B cell (primary cell): ENCODE measurements at regions of chr16 and their contacts with region 1.

Region 1: DNA sequence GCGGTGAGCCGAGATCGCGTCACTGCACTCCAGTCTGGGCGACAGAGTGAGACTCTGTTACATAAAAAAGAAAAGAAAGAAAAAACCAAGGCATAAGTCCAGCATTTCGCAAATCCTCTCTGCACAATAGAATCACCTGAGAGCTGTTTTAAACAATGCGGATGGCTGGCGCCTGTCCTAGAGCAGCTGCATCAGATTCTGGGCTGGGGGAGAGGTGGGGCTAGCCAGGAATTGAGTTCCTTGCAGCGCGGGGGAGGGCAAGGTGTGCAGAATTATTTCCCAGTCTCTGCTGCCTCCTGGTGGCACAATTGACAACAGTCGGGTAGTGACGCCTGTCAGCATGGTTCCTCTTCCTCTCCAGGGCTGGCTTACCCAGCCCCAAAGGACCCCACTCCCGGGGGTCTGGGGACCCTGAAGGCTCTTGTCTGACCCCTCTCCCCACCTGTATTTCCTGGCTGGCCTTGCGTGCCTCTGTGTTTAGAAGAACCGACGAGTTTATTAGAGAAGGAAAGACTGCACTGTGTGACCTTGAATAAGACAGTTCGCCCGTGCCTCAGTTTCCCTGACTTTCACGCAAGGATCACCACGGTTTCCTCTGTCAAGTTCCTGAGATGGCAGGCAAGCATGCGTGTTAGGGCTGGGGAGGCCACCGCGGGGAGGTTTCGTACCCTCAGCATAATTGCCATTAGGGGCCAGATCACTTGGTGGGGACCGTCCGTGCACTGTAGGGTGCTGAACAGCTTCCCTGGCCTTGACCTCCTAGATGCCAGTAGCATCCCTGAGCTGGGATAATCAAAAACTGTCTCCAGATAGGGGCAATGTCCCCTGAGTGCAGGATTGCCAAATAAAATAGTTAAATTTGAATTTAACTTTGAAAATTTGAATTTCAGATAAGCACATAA is 41.0 kb upstream of the PLCG2 start:
- DNase-seq: peak; percentile 91
- ATAC-seq: peak; percentile 64
- H3K4me3 ChIP-seq: peak overlapping the region; percentile 11 to 59 (median 39)
- H3K4me3 Mint-ChIP-seq: peak overlapping the region; percentile 83
- H3K27ac ChIP-seq: peak overlapping the region; percentile 70 to 88
- H3K27ac Mint-ChIP-seq: peak overlapping the region; percentile 92
- H3K4me1 ChIP-seq: peaks cover 42 to 54% of the 10 kb centered on the region in 2 donors
- H3K4me1 Mint-ChIP-seq: peaks cover 50% of the 10 kb centered on the region
- H3K27me3 ChIP-seq: no peaks in the 10 kb centered on the region
- H3K27me3 Mint-ChIP-seq: no peaks in the 10 kb centered on the region
- CTCF ChIP-seq: peak; percentile 94

Region 2: DNA sequence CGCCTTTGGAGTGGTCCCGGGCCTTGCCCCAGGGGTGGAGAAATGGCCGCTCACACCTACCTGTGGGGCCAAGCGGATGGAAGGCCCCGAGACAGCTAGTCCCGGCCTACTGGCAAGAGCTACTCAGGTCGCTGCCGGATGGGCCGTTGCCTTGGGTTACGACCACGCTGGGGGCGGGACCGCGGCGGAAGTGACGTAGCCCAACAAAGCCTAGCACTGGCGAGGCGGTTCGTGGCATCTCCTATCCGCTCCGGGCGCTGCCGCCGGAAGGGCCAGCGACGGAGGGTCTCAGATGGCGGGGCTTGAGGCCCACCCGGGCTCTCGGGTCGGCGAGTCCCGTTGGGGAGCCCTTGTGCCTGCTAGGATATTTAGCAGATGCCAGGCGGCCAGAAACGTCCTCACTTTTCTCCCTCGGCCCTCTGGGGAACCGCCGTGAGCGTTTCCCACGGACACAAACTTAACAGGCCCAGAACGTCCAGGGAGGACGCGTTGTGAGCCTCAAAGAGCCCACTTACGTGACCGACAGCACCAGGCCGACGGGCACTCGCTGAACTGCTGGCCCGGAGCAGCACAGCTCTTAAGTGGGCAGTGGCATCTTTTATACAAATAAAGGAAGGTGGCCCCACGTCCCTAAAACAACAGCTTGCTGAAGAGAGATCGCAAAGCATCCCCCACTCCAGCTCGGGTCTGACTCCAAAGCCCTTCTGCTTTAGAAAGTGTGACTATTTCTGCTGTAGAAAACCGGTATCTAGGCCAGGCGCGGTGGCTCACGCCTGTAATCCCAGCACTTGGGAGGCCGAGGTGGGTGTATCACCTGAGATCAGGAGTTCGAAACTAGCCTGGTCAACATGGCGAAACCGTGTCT is 660.8 kb before region 1 on chr16 and contains the start of gene C16orf46:
- CTCF ChIA-PET with region 1: no interaction called
- POLR2A ChIA-PET with region 1: no interaction called
- intact Hi-C with region 1: loop called (anchors 1 kb)
- DNase-seq: peak; percentile 98
- ATAC-seq: peak; percentile 77
- H3K4me3 ChIP-seq: peak within 1 kb of the TSS; percentile 67 to 84 (median 82)
- H3K4me3 Mint-ChIP-seq: peak within 1 kb of the TSS; percentile 47
- H3K27ac ChIP-seq: peak within 1 kb of the TSS; percentile 79 to 89
- H3K27ac Mint-ChIP-seq: peak within 1 kb of the TSS; percentile 51
- H3K4me1 ChIP-seq: peaks cover 4 to 12% of the 10 kb centered on the region in 2 donors
- H3K4me1 Mint-ChIP-seq: peaks cover 4% of the 10 kb centered on the region
- H3K27me3 ChIP-seq: no peaks in the 10 kb centered on the region
- H3K27me3 Mint-ChIP-seq: no peaks in the 10 kb centered on the region
- CTCF ChIP-seq: no peak
- total RNA-seq, gene C16orf46: 0.73 TPM in 1 of 2 replicates, not detected in the other

Region 3: DNA sequence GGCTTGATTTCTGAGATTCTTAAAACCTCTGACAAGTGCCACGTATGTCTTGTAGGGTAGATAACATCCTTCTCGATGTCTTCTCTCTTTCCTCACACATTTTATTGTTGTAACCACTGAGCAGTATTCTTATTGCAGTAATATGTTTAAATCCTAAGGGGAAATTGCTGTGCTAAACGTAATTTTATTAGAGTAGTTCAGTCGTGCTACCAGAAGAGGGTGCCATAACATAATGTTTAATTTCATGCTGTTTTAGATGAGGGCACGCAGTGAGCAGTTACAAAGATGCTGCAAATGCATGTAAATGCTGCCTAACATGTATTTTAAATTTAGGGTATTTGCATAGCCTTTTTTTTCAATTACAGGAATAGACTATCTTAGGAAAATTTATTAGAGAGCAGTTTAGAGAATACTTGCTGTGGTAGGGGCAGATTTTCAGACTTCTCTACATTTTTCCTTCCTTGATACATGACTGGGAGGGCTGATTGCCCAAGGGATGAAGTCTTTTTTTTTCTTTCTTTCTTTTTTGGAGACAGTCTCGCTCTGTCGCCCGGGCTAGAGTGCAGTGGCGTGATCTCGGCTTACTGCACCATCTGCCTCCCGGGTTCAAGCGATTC is 371.7 kb before region 1 on chr16:
- CTCF ChIA-PET with region 1: interaction called, 72 read pairs
- POLR2A ChIA-PET with region 1: no interaction called
- intact Hi-C with region 1: loop called (anchors 1 kb)
- DNase-seq: peak; percentile 73
- ATAC-seq: peak; percentile 85
- H3K4me3 ChIP-seq: no peak overlapping the region
- H3K4me3 Mint-ChIP-seq: no peak overlapping the region
- H3K27ac ChIP-seq: no peak overlapping the region
- H3K27ac Mint-ChIP-seq: no peak overlapping the region
- H3K4me1 ChIP-seq: no peaks in the 10 kb centered on the region
- H3K4me1 Mint-ChIP-seq: no peaks in the 10 kb centered on the region
- H3K27me3 ChIP-seq: no peaks in the 10 kb centered on the region
- H3K27me3 Mint-ChIP-seq: no peaks in the 10 kb centered on the region
- CTCF ChIP-seq: peak; percentile 92

Region 4: GRCh38 chr16:81680444-81681275 is 57.5 kb before region 1 on chr16:
- CTCF ChIA-PET with region 1: no interaction called
- POLR2A ChIA-PET with region 1: no interaction called
- intact Hi-C with region 1: no loop called
- DNase-seq: no peak
- ATAC-seq: no peak
- H3K4me3 ChIP-seq: no peak overlapping the region
- H3K4me3 Mint-ChIP-seq: no peak overlapping the region
- H3K27ac ChIP-seq: no peak overlapping the region
- H3K27ac Mint-ChIP-seq: no peak overlapping the region
- H3K4me1 ChIP-seq: no peaks in the 10 kb centered on the region
- H3K4me1 Mint-ChIP-seq: no peaks in the 10 kb centered on the region
- H3K27me3 ChIP-seq: no peaks in the 10 kb centered on the region
- H3K27me3 Mint-ChIP-seq: no peaks in the 10 kb centered on the region
- CTCF ChIP-seq: no peak

Region 5: GRCh38 chr16:81723098-81723723 is 14.9 kb before region 1 on chr16:
- CTCF ChIA-PET with region 1: interaction called, 32 read pairs
- POLR2A ChIA-PET with region 1: no interaction called
- intact Hi-C with region 1: loop called (anchors 2 kb)
- DNase-seq: peak; percentile 84
- ATAC-seq: peak; percentile 87
- H3K4me3 ChIP-seq: no peak overlapping the region
- H3K4me3 Mint-ChIP-seq: no peak overlapping the region
- H3K27ac ChIP-seq: no peak overlapping the region
- H3K27ac Mint-ChIP-seq: peak overlapping the region; percentile 57
- H3K4me1 ChIP-seq: peaks cover 7 to 24% of the 10 kb centered on the region in 2 donors
- H3K4me1 Mint-ChIP-seq: peaks cover 11% of the 10 kb centered on the region
- H3K27me3 ChIP-seq: no peaks in the 10 kb centered on the region
- H3K27me3 Mint-ChIP-seq: no peaks in the 10 kb centered on the region
- CTCF ChIP-seq: peak; percentile 88

Region 6: DNA sequence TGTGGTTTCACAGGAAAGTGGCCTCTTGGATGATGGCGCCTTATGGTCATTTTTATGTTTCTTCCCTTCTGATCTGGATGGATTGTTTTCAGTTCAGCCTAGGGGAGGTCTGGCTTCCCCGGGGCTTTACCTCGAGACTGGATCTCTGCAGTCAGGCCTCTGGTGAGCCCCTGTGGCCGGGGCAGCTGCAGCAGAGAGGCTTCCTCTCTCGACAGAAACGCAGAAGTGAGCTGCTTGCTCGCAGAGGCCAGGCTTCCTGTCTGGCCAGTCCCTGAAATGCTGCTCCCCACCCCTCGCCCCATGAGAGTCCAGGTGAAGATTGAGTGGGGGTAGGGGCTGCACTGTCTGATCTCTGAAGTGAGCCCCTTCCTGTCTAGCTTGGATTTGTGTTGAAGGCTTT is 85.0 kb after region 1 on chr16:
- CTCF ChIA-PET with region 1: interaction called, 5 read pairs
- POLR2A ChIA-PET with region 1: interaction called, 5 read pairs
- intact Hi-C with region 1: loop called (anchors 1 kb)
- DNase-seq: peak; percentile 86
- ATAC-seq: peak; percentile 51
- H3K4me3 ChIP-seq: peak overlapping the region; percentile 23 to 65 (median 54)
- H3K4me3 Mint-ChIP-seq: peak overlapping the region; percentile 75
- H3K27ac ChIP-seq: peak overlapping the region; percentile 94 to 98
- H3K27ac Mint-ChIP-seq: peak overlapping the region; percentile 92
- H3K4me1 ChIP-seq: peaks cover 96 to 100% of the 10 kb centered on the region in 2 donors
- H3K4me1 Mint-ChIP-seq: peaks cover 94% of the 10 kb centered on the region
- H3K27me3 ChIP-seq: no peaks in the 10 kb centered on the region
- H3K27me3 Mint-ChIP-seq: no peaks in the 10 kb centered on the region
- CTCF ChIP-seq: no peak

Region 7: DNA sequence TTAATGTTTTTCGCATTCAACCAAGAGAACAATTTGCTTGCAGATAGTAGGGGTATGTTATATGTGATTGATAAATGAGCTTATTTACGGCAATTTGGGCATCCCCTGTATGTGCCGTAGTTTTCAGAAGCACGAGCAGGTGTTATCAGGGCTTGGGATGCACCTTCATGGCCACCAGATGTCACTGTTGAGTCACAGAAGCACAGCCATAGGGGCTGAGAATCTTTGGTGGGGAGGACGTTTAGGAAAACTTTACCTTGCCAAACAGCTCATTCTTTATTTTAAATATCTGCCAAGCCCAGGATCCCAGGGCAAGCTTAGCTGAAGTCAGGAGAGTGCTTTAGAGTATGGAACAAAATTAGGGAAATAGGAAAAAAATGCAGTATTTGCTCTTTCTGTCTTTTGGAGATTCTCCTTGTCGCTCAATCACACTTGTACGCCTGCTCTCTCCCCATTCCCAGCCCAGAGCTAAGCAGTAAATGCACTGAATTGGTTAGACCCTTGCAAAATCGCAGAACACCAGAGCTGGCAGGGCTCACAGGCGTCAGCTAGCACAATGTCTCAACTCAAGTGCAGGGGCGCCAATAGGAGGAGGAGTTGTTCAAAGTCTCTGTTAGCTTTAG is 525.5 kb after region 1 on chr16:
- CTCF ChIA-PET with region 1: no interaction called
- POLR2A ChIA-PET with region 1: no interaction called
- intact Hi-C with region 1: no loop called
- DNase-seq: peak; percentile 67
- ATAC-seq: peak; percentile 66
- H3K4me3 ChIP-seq: no peak overlapping the region
- H3K4me3 Mint-ChIP-seq: no peak overlapping the region
- H3K27ac ChIP-seq: no peak overlapping the region
- H3K27ac Mint-ChIP-seq: no peak overlapping the region
- H3K4me1 ChIP-seq: no peaks in the 10 kb centered on the region
- H3K4me1 Mint-ChIP-seq: no peaks in the 10 kb centered on the region
- H3K27me3 ChIP-seq: peaks cover 0 to 5% (median 2%) of the 10 kb centered on the region in 4 experiments
- H3K27me3 Mint-ChIP-seq: peaks cover 11% of the 10 kb centered on the region
- CTCF ChIP-seq: peak; percentile 96